H1 (cell line): ENCODE measurements at regions of chr3 and their contacts with region 1.

Region 1: GRCh38 chr3:33372218-33373081 is 67.8 kb downstream of the UBP1 start:
- DNase-seq: peak in 1 of 2 experiments; percentile 55
- H3K4me3 ChIP-seq: no peak overlapping the region
- H3K27ac ChIP-seq: no peak overlapping the region
- H3K4me1 ChIP-seq: no peaks in the 10 kb centered on the region
- H3K27me3 ChIP-seq: no peaks in the 10 kb centered on the region
- CTCF ChIP-seq: peak in 2 of 3 experiments; percentile 82 to 89; a peak in 3 of 4 replicates
- EP300 ChIP-seq: no peak
- POLR2A ChIP-seq: no peak
- RAD21 ChIP-seq: peak; percentile 88 to 90

Region 2: GRCh38 chr3:33115024-33115768 is 257.3 kb before region 1 on chr3:
- CTCF ChIA-PET with region 1: interaction called, 10 read pairs
- POLR2A ChIA-PET with region 1: no interaction called
- DNase-seq: no peak
- H3K4me3 ChIP-seq: peak overlapping the region in 1 of 4 experiments; percentile 70; a peak in 2 of 8 replicates
- H3K27ac ChIP-seq: no peak overlapping the region
- H3K4me1 ChIP-seq: peaks cover 0 to 5% (median 3%) of the 10 kb centered on the region in 4 experiments; a peak in 5 of 7 replicates
- H3K27me3 ChIP-seq: no peaks in the 10 kb centered on the region
- CTCF ChIP-seq: no peak
- EP300 ChIP-seq: no peak
- POLR2A ChIP-seq: no peak
- RAD21 ChIP-seq: no peak

Region 3: GRCh38 chr3:33144433-33144832 is 228.0 kb before region 1 on chr3:
- CTCF ChIA-PET with region 1: interaction called, 36 read pairs
- POLR2A ChIA-PET with region 1: no interaction called
- DNase-seq: peak; percentile 27 to 81
- H3K4me3 ChIP-seq: no peak overlapping the region
- H3K27ac ChIP-seq: no peak overlapping the region
- H3K4me1 ChIP-seq: no peaks in the 10 kb centered on the region
- H3K27me3 ChIP-seq: no peaks in the 10 kb centered on the region
- CTCF ChIP-seq: peak; percentile 86 to 92 (median 86)
- EP300 ChIP-seq: no peak; a peak in 1 of 3 replicates
- POLR2A ChIP-seq: no peak
- RAD21 ChIP-seq: peak; percentile 51 to 68

Region 4: GRCh38 chr3:33218446-33219174 is 153.8 kb before region 1 on chr3 and contains the start of gene SUSD5:
- CTCF ChIA-PET with region 1: interaction called, 10 read pairs
- POLR2A ChIA-PET with region 1: no interaction called
- DNase-seq: peak; percentile 15 to 80
- H3K4me3 ChIP-seq: peak within 1 kb of the TSS; percentile 43 to 67 (median 56)
- H3K27ac ChIP-seq: no peak within 1 kb of the TSS
- H3K4me1 ChIP-seq: peaks cover 0 to 5% (median 1%) of the 10 kb centered on the region in 4 experiments; a peak in 3 of 7 replicates
- H3K27me3 ChIP-seq: peaks cover 13 to 48% (median 29%) of the 10 kb centered on the region in 4 experiments
- CTCF ChIP-seq: no peak
- EP300 ChIP-seq: no peak
- POLR2A ChIP-seq: no peak
- RAD21 ChIP-seq: no peak
- total RNA-seq, gene SUSD5: 3.3 and 3.9 TPM in 2 replicates

Region 5: GRCh38 chr3:33229066-33229465 is 143.4 kb before region 1 on chr3:
- CTCF ChIA-PET with region 1: no interaction called
- POLR2A ChIA-PET with region 1: no interaction called
- DNase-seq: no peak
- H3K4me3 ChIP-seq: no peak overlapping the region
- H3K27ac ChIP-seq: no peak overlapping the region
- H3K4me1 ChIP-seq: no peaks in the 10 kb centered on the region
- H3K27me3 ChIP-seq: no peaks in the 10 kb centered on the region
- CTCF ChIP-seq: no peak
- EP300 ChIP-seq: no peak
- POLR2A ChIP-seq: no peak
- RAD21 ChIP-seq: no peak

Region 6: GRCh38 chr3:33385423-33385822 is 13.0 kb after region 1 on chr3:
- CTCF ChIA-PET with region 1: interaction called, 24 read pairs
- POLR2A ChIA-PET with region 1: interaction called, 3 read pairs
- DNase-seq: no peak
- H3K4me3 ChIP-seq: no peak overlapping the region
- H3K27ac ChIP-seq: no peak overlapping the region
- H3K4me1 ChIP-seq: no peaks in the 10 kb centered on the region; a peak in 1 of 7 replicates
- H3K27me3 ChIP-seq: no peaks in the 10 kb centered on the region
- CTCF ChIP-seq: no peak
- EP300 ChIP-seq: no peak
- POLR2A ChIP-seq: peak in 1 of 2 experiments; percentile 37; a peak in 1 of 3 replicates
- RAD21 ChIP-seq: no peak

Region 7: GRCh38 chr3:33496449-33496848 is 124.0 kb after region 1 on chr3:
- CTCF ChIA-PET with region 1: no interaction called
- POLR2A ChIA-PET with region 1: no interaction called
- DNase-seq: no peak
- H3K4me3 ChIP-seq: no peak overlapping the region
- H3K27ac ChIP-seq: no peak overlapping the region
- H3K4me1 ChIP-seq: no peaks in the 10 kb centered on the region
- H3K27me3 ChIP-seq: no peaks in the 10 kb centered on the region
- CTCF ChIP-seq: no peak
- EP300 ChIP-seq: no peak
- POLR2A ChIP-seq: no peak
- RAD21 ChIP-seq: no peak